ENCODE measurements at regions of chr12 and their contacts with region 1.

Region 1: DNA sequence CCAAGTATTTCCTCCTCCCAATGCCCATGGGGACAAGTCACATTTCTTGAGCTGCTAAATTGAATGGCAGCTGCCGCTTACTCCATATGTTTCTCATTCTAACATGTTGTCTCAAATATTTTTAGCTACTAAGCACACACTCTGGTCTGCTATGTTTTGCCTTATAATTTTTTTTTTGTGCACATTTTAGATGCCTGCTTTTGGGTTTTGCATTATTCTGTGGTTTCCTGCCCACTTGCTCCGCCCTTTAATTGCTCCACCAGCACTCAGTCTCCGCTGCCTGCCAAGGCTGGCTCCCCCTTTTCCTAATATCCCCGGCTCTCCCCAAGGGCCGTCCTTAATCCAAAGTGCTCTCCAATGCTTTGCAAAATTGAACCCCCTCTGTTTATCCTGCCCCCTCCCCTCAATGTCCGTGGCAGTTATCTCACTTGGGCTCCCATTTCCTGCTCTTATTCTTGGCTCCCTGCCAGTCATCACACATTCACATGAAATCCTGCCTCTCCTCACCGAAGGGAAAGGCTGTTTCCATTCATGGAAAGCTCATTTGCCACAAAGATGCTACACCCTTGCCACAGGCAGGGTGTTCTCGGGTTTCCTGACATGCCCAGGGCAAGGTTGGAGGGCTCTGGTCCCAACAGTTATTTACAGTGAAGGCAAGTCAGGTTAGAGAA is 79.4 kb downstream of the C12orf75 start:
- DNase-seq: no peak
- ATAC-seq: no peak
- H3K4me3 ChIP-seq: no peak overlapping the region
- H3K27ac ChIP-seq: no peak overlapping the region
- H3K4me1 ChIP-seq: no peaks in the 10 kb centered on the region
- H3K27me3 ChIP-seq: no peaks in the 10 kb centered on the region
- CTCF ChIP-seq: no peak

Region 2: DNA sequence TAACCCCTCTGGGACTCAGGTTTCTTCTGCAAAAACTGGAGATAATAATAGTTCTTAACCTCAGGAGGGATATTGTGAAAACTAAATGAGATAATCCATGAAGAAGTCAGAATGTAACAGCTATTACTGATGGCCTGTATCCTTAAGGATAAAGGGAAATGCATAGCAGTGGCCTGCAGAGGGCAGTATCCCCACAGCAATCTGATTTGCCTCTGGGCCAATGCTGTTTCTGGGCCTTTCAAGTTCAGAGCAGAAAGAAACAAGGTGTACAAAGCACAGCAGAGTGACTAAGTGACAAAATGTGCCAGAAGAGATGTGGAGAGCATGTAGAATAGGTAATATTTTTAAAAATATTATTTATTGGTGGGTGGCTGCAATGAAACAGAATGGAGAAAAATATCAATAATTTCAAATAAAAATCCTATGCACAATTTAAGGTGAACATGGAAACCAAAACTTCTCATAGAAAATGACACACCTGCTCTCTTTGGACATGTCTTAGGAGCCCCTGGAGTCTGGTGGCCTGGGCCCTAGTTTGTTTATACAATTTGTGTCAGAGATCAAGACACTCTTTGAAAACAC is 10.8 kb after region 1 on chr12:
- CTCF ChIA-PET with region 1: no interaction called
- POLR2A ChIA-PET with region 1: no interaction called
- intact Hi-C with region 1: no loop called
- DNase-seq: peak; percentile 90
- ATAC-seq: peak; percentile 84
- H3K4me3 ChIP-seq: no peak overlapping the region
- H3K27ac ChIP-seq: no peak overlapping the region
- H3K4me1 ChIP-seq: peaks cover 9% of the 10 kb centered on the region
- H3K27me3 ChIP-seq: no peaks in the 10 kb centered on the region
- CTCF ChIP-seq: peak; percentile 98

Region 3: DNA sequence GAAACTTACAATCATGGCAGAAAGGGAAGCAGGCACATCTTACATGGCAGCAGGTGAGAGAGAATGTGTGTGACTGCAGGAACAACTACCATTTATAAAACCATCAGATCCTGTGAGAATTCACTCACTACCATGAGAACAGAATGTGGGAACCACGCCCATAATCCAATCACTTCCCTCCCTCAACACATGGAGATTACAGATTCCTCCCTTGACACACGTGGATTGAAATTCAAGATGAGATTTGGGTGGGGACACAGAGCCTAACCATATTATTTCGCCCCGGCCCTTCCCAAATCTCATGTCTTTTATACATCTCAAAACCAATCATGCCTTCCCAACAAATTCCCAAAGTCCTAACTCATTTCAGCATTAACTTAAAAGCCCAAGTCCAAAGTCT is 124.1 kb after region 1 on chr12:
- CTCF ChIA-PET with region 1: no interaction called
- POLR2A ChIA-PET with region 1: no interaction called
- intact Hi-C with region 1: no loop called
- DNase-seq: no peak
- ATAC-seq: no peak
- H3K4me3 ChIP-seq: no peak overlapping the region
- H3K27ac ChIP-seq: no peak overlapping the region
- H3K4me1 ChIP-seq: no peaks in the 10 kb centered on the region
- H3K27me3 ChIP-seq: no peaks in the 10 kb centered on the region
- CTCF ChIP-seq: no peak

Region 4: GRCh38 chr12:106282457-106283097 is 872.6 kb after region 1 on chr12:
- CTCF ChIA-PET with region 1: no interaction called
- POLR2A ChIA-PET with region 1: no interaction called
- intact Hi-C with region 1: loop called (anchors 10 kb)
- DNase-seq: peak; percentile 78
- ATAC-seq: peak; percentile 71
- H3K4me3 ChIP-seq: no peak overlapping the region
- H3K27ac ChIP-seq: no peak overlapping the region
- H3K4me1 ChIP-seq: peaks cover 33% of the 10 kb centered on the region
- H3K27me3 ChIP-seq: no peaks in the 10 kb centered on the region
- CTCF ChIP-seq: peak; percentile 94

Measured in PC-3 (cell line).